ENCODE measurements at regions of chr17 and their contacts with region 1.

Region 1: GRCh38 chr17:51260125-51260880 is at the start of gene UTP18:
- DNase-seq: peak; percentile 93
- ATAC-seq: peak; percentile 87
- H3K4me3 Mint-ChIP-seq: peak within 1 kb of the TSS; percentile 95
- H3K27ac Mint-ChIP-seq: peak within 1 kb of the TSS; percentile 99
- H3K4me1 Mint-ChIP-seq: peaks cover 63% of the 10 kb centered on the region
- H3K27me3 Mint-ChIP-seq: no peaks in the 10 kb centered on the region
- CTCF ChIP-seq: no peak
- total RNA-seq, gene UTP18: 37.0 and 39.1 TPM in 2 replicates

Region 2: DNA sequence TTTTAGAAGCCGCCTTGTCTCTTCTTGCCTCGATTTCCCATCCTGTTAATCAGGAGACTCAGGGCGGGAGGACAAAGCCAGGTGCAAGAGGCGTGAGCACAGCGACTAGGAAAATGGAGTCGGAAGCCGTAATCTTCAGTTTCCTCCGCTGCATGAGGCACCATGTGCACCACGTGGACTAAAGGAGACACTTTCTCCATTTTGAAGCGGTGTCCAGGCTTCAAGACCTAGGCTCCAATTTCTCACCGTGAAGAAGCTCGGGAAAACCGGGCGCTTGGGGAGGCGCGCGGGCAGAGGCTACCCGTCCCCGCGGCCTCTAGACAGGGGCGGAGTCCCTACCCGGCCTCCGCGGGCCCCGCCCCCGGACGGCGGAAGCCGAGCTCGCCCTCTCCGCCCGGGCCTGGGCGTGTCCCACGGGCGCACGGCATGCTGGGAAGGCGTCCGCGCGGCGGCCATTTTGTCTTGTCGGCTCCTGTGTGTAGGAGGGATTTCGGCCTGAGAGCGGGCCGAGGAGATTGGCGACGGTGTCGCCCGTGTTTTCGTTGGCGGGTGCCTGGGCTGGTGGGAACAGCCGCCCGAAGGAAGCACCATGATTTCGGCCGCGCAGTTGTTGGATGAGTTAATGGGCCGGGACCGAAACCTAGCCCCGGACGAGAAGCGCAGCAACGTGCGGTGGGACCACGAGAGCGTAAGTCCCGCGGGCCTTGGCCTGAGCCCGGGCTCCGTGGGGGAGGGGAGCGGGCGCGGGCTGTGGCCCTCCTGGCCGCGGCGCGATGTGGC is 541.0 kb before region 1 on chr17 and contains the start of gene LUC7L3:
- CTCF ChIA-PET with region 1: no interaction called
- POLR2A ChIA-PET with region 1: no interaction called
- intact Hi-C with region 1: loop called (anchors 1 kb)
- DNase-seq: peak; percentile 97
- ATAC-seq: peak; percentile 92
- H3K4me3 Mint-ChIP-seq: peak within 1 kb of the TSS; percentile 97
- H3K27ac Mint-ChIP-seq: peak within 1 kb of the TSS; percentile 98
- H3K4me1 Mint-ChIP-seq: peaks cover 45% of the 10 kb centered on the region
- H3K27me3 Mint-ChIP-seq: no peaks in the 10 kb centered on the region
- CTCF ChIP-seq: no peak
- total RNA-seq, gene LUC7L3: 158 and 162 TPM in 2 replicates

Region 3: GRCh38 chr17:51056813-51057510 is 203.3 kb before region 1 on chr17:
- CTCF ChIA-PET with region 1: no interaction called
- POLR2A ChIA-PET with region 1: no interaction called
- intact Hi-C with region 1: loop called (anchors 5 kb)
- DNase-seq: no peak
- ATAC-seq: peak; percentile 71
- H3K4me3 Mint-ChIP-seq: no peak overlapping the region
- H3K27ac Mint-ChIP-seq: no peak overlapping the region
- H3K4me1 Mint-ChIP-seq: peaks cover 20% of the 10 kb centered on the region
- H3K27me3 Mint-ChIP-seq: no peaks in the 10 kb centered on the region
- CTCF ChIP-seq: peak; percentile 63

Region 4: DNA sequence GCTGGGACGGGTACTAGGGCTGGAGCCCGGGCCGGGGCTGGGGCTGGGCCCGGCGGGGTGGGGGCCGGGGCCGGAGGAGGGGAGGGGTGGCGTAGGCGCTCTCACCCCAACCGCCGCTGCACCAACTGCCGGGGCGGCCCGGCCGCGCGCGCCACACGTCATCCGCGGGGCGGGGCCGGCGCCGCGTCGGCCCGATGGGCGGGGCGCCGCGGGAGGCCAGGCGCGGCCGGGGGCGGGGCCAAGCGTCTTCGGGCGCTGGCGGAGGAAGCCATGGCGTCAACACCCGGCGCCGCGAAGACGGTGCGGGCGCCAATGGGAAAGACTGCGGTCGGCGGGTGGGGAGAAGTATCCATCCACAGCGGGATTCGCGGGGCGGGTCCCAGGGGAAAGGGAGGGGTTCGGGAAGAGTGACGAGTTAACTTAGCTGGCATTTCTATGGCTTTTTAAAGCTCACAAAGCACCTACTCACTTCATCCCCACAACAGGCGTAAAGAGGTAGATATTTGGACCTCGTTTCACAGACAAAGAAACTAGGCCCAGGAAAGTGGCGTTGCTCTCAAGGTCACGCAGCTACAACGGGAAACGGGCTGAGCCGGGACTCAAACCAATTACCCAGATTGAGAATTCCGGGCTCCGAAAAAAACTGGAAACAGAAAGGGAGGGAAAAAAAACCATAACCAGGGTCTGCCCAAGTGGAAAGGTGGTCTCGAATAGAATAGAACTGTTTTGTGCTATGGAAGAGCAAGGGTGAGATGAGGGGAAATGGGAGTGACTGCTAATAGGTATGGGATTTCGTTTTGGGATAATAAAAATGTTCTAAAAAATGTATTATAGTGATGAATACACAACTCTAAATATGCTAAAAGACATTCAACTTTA is 139.3 kb before region 1 on chr17 and contains the start of gene SPAG9:
- CTCF ChIA-PET with region 1: no interaction called
- POLR2A ChIA-PET with region 1: no interaction called
- intact Hi-C with region 1: loop called (anchors 2 kb)
- DNase-seq: peak; percentile 95
- ATAC-seq: peak; percentile 83
- H3K4me3 Mint-ChIP-seq: peak within 1 kb of the TSS; percentile 94
- H3K27ac Mint-ChIP-seq: peak within 1 kb of the TSS; percentile 99
- H3K4me1 Mint-ChIP-seq: peaks cover 56% of the 10 kb centered on the region
- H3K27me3 Mint-ChIP-seq: no peaks in the 10 kb centered on the region
- CTCF ChIP-seq: no peak
- total RNA-seq, gene SPAG9: 41.6 and 49.3 TPM in 2 replicates

Region 5: DNA sequence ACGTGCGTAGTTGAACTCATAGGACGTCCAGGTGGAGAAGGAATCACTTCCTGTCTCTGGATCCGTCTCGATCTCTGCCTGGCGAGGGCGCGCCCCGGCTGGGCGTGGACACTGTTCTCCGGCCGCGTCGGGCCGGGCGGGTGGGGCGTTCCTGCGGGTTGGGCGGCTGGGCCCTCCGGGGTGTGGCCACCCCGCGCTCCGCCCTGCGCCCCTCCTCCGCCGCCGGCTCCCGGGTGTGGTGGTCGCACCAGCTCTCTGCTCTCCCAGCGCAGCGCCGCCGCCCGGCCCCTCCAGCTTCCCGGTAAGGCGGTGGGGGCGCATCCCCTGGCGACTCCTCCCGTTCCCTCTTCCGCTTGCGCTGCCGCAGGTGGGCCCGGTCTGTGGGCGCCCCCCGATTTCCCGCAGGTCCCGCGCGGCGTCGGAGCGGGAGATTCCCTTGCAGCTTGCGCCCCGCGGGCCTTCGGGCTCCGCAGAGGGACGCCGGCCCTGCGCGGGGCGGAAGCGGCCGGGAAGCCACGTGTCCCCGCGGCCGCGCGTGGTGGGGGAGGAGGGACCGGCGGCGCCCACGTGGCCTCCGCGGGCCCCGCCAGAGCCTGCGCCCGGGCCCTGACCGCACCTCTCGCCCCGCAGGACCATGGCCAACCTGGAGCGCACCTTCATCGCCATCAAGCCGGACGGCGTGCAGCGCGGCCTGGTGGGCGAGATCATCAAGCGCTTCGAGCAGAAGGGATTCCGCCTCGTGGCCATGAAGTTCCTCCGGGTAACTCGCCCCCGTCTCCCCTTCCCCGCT is 93.9 kb before region 1 on chr17 and contains the start of gene NME2:
- CTCF ChIA-PET with region 1: no interaction called
- POLR2A ChIA-PET with region 1: interaction called, 3 read pairs
- intact Hi-C with region 1: loop called (anchors 1 kb)
- DNase-seq: peak; percentile 85
- ATAC-seq: peak; percentile 86
- H3K4me3 Mint-ChIP-seq: peak within 1 kb of the TSS; percentile 86
- H3K27ac Mint-ChIP-seq: peak within 1 kb of the TSS; percentile 90
- H3K4me1 Mint-ChIP-seq: peaks cover 24% of the 10 kb centered on the region
- H3K27me3 Mint-ChIP-seq: no peaks in the 10 kb centered on the region
- CTCF ChIP-seq: no peak
- total RNA-seq, gene NME2: 439 and 524 TPM in 2 replicates